Left cardiac atrium (tissue), 4 donors: ENCODE measurements at regions of chr10 and their contacts with region 1.

Region 1: DNA sequence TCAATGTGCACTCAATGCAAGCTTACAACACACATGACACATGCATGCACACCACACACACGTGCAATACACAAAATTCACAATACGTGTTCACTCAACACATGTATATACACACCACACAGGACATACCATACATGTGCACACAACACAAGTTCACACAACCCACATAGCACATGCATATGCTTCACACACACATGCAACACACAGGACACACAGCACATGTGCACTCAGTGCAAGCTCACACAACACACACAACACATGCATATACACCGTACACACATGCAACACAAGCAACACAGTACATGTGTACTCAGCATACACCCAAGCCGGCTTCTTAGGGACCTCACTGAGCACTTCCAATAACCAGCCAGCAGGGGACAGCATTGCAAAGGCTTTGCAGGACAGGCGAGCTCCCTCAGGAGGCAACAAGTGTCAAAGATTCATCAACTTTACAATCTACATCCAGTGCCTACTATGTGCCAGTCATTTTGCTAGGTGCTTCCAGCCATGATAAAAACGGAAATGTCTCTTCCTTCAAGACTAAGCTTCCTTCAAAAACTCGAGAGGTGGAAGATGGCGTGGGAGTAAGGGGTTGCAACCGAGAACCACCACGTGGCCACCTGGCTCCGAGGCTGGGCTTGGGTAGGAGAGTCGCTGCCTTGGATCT is 61.1 kb downstream of the JCAD start:
- DNase-seq: peak; percentile 78
- ATAC-seq: peak in 1 of 2 donors; percentile 56

Region 2: GRCh38 chr10:30241422-30242110 is 243.3 kb after region 1 on chr10:
- intact Hi-C with region 1: loop called (anchors 1 to 5 kb)
- DNase-seq: no peak
- ATAC-seq: no peak

Region 3: DNA sequence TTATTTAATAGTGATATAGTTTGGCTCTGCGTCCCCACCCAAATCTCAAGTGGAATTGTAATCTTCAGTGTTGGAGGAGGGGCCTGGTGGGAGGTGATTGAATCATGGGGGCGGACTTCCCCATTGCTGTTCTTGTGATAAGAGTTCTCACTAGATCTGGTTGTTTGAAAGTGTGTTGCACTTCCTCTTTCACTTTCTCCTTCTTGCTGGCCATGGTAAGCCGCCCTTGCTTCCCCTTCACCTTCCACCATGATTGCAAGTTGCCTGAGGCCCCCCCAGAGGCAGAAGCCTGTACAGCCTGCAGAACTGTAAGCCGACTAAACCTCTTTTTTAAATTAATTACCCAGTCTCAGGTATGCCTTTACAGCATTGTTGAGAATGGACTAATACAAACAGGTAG is 249.4 kb after region 1 on chr10:
- intact Hi-C with region 1: loop called in 1 of 2 experiments (anchors 5 kb)
- DNase-seq: no peak
- ATAC-seq: no peak